ENCODE measurements at regions of chr16 and their contacts with region 1.

Region 1: GRCh38 chr16:72467157-72467759 is 295.3 kb upstream of the PMFBP1 start:
- DNase-seq: peak; percentile 72
- H3K4me3 ChIP-seq: no peak overlapping the region
- H3K27ac ChIP-seq: no peak overlapping the region
- H3K4me1 ChIP-seq: peaks cover 17% of the 10 kb centered on the region; the same call in 1 of the 2 replicates
- H3K27me3 ChIP-seq: no peaks in the 10 kb centered on the region

Region 2: DNA sequence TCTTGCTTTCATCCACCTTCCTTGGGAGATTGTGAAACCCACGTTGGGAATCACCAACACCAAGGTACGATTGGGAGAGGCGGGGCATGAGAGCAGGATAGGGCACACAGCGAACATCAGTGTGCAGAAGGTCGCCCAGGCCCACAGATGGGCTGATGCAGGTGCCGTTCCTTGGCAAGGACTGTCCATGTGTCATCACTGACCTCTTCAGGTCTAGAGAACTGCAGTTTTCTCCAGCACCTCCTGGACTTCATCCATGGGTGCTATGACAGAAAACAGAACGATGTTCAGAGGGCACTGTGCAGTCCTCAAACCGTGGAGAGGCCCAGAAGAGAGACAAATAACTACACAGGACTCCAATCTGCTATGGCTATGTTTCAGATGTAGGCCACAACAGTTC is 866.4 kb before region 1 on chr16:
- in situ Hi-C with region 1: no loop called
- DNase-seq: no peak
- H3K4me3 ChIP-seq: no peak overlapping the region
- H3K27ac ChIP-seq: no peak overlapping the region
- H3K4me1 ChIP-seq: no peaks in the 10 kb centered on the region
- H3K27me3 ChIP-seq: peaks cover 7% of the 10 kb centered on the region; the same call in 1 of the 2 replicates

Region 3: GRCh38 chr16:72124761-72125634 is 342.3 kb before region 1 on chr16:
- in situ Hi-C with region 1: loop called (anchors 10 kb)
- DNase-seq: peak; percentile 78
- H3K4me3 ChIP-seq: no peak overlapping the region
- H3K27ac ChIP-seq: no peak overlapping the region
- H3K4me1 ChIP-seq: no peaks in the 10 kb centered on the region
- H3K27me3 ChIP-seq: no peaks in the 10 kb centered on the region

Region 4: DNA sequence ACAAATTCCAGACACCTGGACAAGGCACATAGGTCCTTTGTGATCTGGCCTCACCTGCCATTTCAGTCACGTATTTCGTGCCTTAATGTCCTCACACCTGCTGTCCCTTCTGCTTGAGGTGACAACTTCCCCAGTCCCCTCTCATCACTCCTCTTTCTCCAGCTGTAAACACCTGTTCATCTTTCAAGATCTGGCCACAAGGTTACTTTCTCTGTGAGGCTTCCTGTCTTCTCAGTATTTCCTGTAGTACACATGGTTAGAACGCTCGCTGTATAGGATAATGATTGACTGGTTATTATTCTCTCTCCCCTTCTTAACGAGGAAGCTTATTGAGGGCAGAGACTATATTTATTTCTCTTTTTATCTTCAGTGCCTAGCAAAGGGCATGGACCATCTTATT is 220.8 kb before region 1 on chr16:
- in situ Hi-C with region 1: loop called (anchors 5 kb)
- DNase-seq: no peak
- H3K4me3 ChIP-seq: no peak overlapping the region
- H3K27ac ChIP-seq: no peak overlapping the region
- H3K4me1 ChIP-seq: peaks cover 29% of the 10 kb centered on the region
- H3K27me3 ChIP-seq: no peaks in the 10 kb centered on the region

Region 5: GRCh38 chr16:73383195-73383987 is 916.1 kb after region 1 on chr16:
- in situ Hi-C with region 1: no loop called
- DNase-seq: no peak
- H3K4me3 ChIP-seq: no peak overlapping the region
- H3K27ac ChIP-seq: no peak overlapping the region
- H3K4me1 ChIP-seq: no peaks in the 10 kb centered on the region
- H3K27me3 ChIP-seq: peaks cover 4% of the 10 kb centered on the region; the same call in 1 of the 2 replicates

Measured in GM23248 (cell line).